Mammary epithelial cell (primary cell): ENCODE measurements at regions of chr2 and their contacts with region 1.

Region 1: DNA sequence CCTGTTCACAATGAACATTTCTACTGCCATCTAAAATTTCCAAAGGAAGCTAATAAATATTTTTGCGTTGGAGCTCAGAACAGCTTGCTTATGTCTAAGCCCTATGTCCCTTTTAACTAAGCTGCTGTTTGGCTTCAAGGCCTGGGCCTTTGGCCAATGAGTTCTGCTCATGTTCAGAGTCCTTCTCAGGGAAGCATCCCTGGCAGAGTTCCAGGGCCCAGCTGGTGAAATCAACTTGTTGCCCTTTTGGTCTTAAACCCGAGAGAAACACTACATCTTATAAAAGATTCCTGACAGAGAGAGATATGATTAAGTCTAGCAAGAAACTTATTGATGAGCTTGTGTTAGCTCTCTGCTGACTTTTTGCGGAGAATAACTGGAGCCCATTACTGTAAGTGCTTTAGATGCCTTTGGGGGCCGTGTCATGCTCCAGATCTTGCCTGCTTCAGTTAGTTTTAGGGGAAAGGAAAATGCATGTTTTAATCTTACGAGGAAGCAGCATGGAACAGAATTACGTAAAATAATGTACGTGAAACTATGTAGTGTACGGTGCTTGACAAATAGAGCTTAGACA is 102.5 kb upstream of the NOSTRIN start:
- DNase-seq: no peak
- H3K4me3 ChIP-seq: no peak overlapping the region
- H3K27ac ChIP-seq: no peak overlapping the region
- H3K4me1 ChIP-seq: peaks cover 17% of the 10 kb centered on the region
- H3K27me3 ChIP-seq: no peaks in the 10 kb centered on the region
- CTCF ChIP-seq: no peak

Region 2: DNA sequence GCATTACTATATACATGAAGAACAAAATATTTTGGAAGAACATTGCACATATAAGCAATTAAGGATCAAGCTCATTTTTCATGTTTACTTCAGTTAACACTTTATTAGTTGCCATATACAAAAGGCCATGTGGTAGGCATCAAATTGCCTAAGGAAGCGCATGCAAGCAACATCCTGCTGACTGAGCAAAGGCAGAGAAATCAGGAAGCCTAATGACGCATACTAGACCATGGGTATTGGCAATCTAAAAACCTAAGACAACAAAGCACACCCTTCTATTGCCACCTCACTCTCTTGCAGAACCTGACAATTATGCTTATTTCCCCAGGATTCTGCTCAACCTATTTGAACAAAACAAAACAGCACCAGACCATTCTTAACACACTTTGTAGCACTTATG is 624.5 kb before region 1 on chr2:
- CTCF ChIA-PET with region 1: no interaction called
- dilution Hi-C with region 1: no loop called
- in situ Hi-C with region 1: no loop called
- intact Hi-C with region 1: no loop called
- DNase-seq: no peak
- H3K4me3 ChIP-seq: no peak overlapping the region
- H3K27ac ChIP-seq: no peak overlapping the region
- H3K4me1 ChIP-seq: no peaks in the 10 kb centered on the region
- H3K27me3 ChIP-seq: no peaks in the 10 kb centered on the region
- CTCF ChIP-seq: no peak

Region 3: DNA sequence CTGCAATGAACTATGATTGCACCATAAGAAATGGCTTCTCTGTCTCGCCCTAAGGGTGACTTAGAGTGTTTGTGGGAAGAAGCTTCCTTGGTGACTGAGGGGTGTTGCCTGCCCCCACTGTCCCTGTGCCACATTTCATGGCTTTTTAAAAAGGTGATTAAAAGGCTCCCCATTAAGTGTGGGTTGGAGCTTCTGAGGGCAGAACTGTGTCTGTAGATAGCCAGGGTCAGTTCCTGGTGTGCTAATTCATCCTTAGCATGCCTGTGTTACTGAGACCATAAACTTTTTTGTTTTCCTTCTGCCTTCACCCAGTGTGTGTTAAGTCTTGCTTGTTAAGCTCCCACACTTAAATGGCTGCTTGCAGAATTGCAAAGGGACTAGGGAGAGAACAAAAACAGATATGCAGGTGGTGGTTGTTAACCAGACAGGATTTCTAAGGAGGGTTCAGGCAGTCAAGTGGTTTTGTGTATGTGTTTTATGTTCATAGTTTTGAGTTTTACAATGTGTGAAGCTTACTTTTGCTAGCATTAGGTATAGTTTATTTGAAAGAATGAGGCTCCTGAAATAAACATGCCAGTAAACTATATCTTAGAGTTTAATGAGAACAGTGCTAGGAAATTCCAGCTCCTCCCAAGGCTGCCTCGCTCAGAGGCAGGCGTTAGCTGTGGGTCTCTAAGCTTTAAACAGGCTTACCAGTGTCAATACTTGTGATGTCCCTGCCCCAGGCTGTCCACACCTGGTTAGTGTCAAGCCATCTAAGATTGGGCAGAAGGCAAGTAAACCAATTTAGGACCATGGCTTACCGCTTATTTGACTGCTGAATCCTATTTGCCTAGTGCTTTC is 229.4 kb before region 1 on chr2:
- CTCF ChIA-PET with region 1: no interaction called
- dilution Hi-C with region 1: no loop called
- in situ Hi-C with region 1: no loop called
- intact Hi-C with region 1: no loop called
- DNase-seq: no peak
- H3K4me3 ChIP-seq: no peak overlapping the region
- H3K27ac ChIP-seq: no peak overlapping the region
- H3K4me1 ChIP-seq: peaks cover under 1% of the 10 kb centered on the region
- H3K27me3 ChIP-seq: no peaks in the 10 kb centered on the region
- CTCF ChIP-seq: no peak

Region 4: GRCh38 chr2:168552450-168552856 is 147.5 kb before region 1 on chr2:
- CTCF ChIA-PET with region 1: no interaction called
- dilution Hi-C with region 1: no loop called
- in situ Hi-C with region 1: no loop called
- intact Hi-C with region 1: no loop called
- DNase-seq: no peak
- H3K4me3 ChIP-seq: no peak overlapping the region
- H3K27ac ChIP-seq: no peak overlapping the region
- H3K4me1 ChIP-seq: no peaks in the 10 kb centered on the region
- H3K27me3 ChIP-seq: no peaks in the 10 kb centered on the region
- CTCF ChIP-seq: no peak

Region 5: DNA sequence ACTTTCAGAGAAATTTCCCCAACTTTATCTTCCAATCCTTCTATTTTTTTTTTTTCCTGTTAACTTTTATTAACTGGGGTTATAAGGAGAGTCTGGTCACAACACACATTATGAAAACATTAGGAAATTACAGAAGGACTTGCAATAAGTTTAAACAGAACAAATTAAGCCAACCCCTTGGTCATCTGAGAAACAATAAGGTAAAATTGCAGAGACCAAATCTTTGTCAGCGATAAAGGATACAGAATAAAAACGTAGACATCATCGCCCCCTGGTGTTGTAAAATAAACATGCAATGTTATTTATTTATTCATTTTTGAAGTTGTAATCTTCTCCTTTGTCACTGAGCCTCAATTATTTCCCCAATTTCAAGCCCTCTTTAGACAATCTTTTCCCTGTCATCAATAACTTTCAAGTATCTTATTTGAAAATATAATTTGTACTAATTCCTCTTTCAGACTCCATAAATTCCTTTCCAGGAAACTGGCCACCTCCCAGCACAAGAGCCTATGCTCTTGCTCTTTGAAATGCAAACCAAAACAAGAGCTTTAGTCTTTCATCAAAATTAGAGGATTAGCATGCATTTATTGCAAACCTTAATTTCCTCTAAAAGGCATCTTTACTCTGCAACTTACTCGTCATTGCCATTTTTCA is 220.7 kb after region 1 on chr2:
- CTCF ChIA-PET with region 1: no interaction called
- dilution Hi-C with region 1: no loop called
- in situ Hi-C with region 1: no loop called
- intact Hi-C with region 1: loop called (anchors 10 kb)
- DNase-seq: no peak
- H3K4me3 ChIP-seq: no peak overlapping the region
- H3K27ac ChIP-seq: no peak overlapping the region
- H3K4me1 ChIP-seq: no peaks in the 10 kb centered on the region
- H3K27me3 ChIP-seq: peaks cover under 1% of the 10 kb centered on the region
- CTCF ChIP-seq: peak; percentile 40 to 52